Vagina (tissue), 2 donors: ENCODE measurements at regions of chr10 and their contacts with region 1.

Region 1: DNA sequence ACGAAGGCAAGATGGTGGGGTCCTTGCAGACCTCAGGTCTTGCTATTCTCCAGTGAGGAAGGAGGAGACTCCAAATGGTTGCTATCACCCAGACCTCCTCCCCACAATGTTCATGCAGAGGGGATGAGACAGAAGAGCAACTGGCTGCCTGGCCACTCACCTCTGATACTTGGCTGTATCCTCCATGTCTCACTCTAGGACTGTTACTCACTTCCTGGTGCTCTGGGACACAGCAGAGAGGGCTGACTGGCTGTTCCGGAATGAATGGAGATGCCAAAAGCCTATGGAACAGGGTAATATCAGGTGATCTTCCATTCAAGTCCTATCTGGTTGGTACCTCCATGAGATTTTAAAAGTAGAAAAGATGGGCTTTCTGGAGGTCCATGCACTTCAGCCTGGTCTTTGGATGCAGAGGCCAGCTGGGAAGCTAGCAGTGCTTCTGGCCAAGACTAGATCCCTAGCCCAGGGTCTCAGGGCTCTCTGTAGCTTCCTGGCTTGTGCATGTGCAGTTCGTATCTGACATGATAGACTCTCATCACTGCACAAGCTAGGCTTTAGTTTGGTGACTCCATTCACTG is 26.9 kb upstream of the ABI1 start:
- DNase-seq: no peak
- H3K4me3 ChIP-seq: no peak overlapping the region
- H3K27ac ChIP-seq: no peak overlapping the region
- H3K4me1 ChIP-seq: no peaks in the 10 kb centered on the region
- H3K27me3 ChIP-seq: no peaks in the 10 kb centered on the region
- CTCF ChIP-seq: no peak
- POLR2A ChIP-seq: no peak

Region 2: GRCh38 chr10:26725837-26726727 is 161.6 kb before region 1 on chr10:
- intact Hi-C with region 1: loop called (anchors 5 kb)
- DNase-seq: no peak
- H3K4me3 ChIP-seq: no peak overlapping the region
- H3K27ac ChIP-seq: no peak overlapping the region
- H3K4me1 ChIP-seq: no peaks in the 10 kb centered on the region
- H3K27me3 ChIP-seq: no peaks in the 10 kb centered on the region
- CTCF ChIP-seq: peak; percentile 51 to 85 (median 64)
- POLR2A ChIP-seq: no peak